Activated CD4-positive, alpha-beta memory T cell treated with anti-CD3 and anti-CD28 coated beads for 36 hours (primary cell): ENCODE measurements at regions of chrX and their contacts with region 1.

Region 1: DNA sequence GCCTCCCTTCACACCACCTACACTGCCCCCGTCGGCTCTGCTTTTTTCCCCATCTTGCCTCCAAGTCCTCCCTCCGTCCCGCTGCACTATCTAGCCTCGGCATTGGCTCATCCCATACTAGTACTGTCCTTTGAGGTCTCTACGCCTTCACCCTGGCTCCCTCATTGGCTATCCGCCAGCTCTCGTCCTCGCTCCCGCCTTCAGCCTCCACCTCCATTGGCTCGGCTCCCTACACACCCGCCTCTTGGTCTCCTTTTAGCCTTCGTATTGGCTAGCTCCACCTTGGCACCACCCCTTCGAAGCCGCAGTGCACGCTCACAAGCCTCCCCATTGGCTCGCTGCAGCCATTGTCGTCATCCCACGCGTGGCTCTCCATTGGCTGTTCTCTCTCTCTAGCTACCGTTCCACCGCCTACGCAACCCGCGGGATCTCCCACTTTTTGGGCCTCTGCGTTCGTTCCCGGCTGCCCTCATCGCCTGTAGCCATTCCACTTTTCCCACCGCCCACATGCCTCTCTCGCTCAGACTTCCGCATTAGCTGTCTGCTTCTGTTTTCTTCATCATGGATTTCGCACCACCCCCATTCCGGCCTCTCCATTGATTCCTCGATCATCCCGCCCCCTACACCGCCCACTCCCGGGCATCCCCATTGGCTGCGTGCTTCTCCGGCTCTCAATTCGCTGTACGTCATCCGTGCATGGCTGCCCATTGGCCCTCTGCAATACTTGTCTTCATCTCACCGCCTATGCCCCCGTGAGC is 404 bp upstream of the PPP1R3F start:
- DNase-seq: peak; percentile 97
- H3K4me3 Mint-ChIP-seq: peak overlapping the region; percentile 91
- H3K27ac Mint-ChIP-seq: peak overlapping the region; percentile 98
- H3K4me1 Mint-ChIP-seq: peaks cover 56% of the 10 kb centered on the region
- H3K27me3 Mint-ChIP-seq: no peaks in the 10 kb centered on the region

Region 2: DNA sequence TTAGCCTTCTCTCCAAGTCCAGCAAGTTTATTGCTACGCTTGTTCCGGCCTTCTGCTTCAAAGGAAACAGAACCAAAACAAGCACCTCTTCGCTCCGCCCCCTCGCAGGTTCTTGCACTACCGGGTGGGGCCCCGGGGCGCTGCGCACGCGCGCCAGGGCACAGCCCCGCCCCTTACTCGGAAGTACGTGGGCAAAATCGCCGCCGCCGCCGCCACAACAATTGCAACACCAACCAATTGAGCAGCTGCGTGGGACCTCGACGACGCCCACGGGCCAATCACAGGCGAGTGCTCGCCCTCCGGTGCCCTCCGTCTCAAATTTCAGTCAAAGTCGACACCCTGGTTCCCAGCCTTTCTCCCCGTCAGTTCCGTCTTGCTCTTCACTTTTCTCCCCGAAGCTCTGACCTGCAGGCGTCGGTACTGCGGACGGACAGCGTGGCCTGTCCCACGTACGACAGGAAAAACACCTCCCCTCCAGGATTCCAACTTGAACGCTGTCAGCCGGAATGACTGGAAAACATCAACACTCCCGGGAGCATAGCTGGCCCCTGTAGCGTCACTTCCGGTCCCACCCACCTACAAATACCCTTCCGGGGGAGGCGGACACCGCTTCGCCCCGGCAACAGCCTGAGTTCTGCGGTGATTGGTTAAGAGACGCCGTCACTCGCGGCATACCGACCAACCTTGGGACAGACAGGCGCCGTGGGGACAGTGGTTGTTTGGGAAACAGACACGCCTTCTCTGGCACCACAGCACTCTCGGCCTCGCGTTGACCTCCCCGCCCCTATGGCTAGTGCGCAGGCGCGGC is 311.2 kb before region 1 on chrX:
- CTCF ChIA-PET with region 1: no interaction called
- POLR2A ChIA-PET with region 1: no interaction called
- intact Hi-C with region 1: loop called (anchors 5 kb)
- DNase-seq: peak; percentile 95
- H3K4me3 Mint-ChIP-seq: peak overlapping the region; percentile 99
- H3K27ac Mint-ChIP-seq: peak overlapping the region; percentile 100
- H3K4me1 Mint-ChIP-seq: peaks cover 32% of the 10 kb centered on the region
- H3K27me3 Mint-ChIP-seq: no peaks in the 10 kb centered on the region

Region 3: GRCh38 chrX:49120099-49120498 is 149.1 kb before region 1 on chrX:
- CTCF ChIA-PET with region 1: no interaction called
- POLR2A ChIA-PET with region 1: no interaction called
- intact Hi-C with region 1: loop called (anchors 1 kb)
- DNase-seq: no peak
- H3K4me3 Mint-ChIP-seq: no peak overlapping the region
- H3K27ac Mint-ChIP-seq: no peak overlapping the region
- H3K4me1 Mint-ChIP-seq: peaks cover 37% of the 10 kb centered on the region
- H3K27me3 Mint-ChIP-seq: no peaks in the 10 kb centered on the region

Region 4: DNA sequence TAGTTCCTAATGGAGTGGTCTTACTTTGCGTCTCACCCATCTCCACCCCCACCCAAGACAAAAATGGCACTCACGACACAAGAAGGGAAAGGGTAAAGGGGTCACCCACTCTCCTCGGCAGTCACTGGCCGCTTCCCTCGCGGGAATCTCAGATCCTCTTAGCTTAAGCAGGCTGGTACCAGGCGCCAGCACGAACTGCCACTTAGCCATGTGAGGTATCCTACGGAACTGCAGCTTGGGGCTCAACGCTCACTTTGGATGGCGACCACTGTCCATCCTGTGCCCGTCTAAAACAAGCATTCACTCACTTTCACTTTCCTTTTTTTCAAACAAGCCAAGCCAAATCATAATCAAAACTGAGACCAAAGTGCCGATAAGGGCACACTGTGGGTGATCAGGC is 121.3 kb before region 1 on chrX:
- CTCF ChIA-PET with region 1: no interaction called
- POLR2A ChIA-PET with region 1: no interaction called
- intact Hi-C with region 1: no loop called
- DNase-seq: no peak
- H3K4me3 Mint-ChIP-seq: no peak overlapping the region
- H3K27ac Mint-ChIP-seq: no peak overlapping the region
- H3K4me1 Mint-ChIP-seq: no peaks in the 10 kb centered on the region
- H3K27me3 Mint-ChIP-seq: no peaks in the 10 kb centered on the region

Region 5: DNA sequence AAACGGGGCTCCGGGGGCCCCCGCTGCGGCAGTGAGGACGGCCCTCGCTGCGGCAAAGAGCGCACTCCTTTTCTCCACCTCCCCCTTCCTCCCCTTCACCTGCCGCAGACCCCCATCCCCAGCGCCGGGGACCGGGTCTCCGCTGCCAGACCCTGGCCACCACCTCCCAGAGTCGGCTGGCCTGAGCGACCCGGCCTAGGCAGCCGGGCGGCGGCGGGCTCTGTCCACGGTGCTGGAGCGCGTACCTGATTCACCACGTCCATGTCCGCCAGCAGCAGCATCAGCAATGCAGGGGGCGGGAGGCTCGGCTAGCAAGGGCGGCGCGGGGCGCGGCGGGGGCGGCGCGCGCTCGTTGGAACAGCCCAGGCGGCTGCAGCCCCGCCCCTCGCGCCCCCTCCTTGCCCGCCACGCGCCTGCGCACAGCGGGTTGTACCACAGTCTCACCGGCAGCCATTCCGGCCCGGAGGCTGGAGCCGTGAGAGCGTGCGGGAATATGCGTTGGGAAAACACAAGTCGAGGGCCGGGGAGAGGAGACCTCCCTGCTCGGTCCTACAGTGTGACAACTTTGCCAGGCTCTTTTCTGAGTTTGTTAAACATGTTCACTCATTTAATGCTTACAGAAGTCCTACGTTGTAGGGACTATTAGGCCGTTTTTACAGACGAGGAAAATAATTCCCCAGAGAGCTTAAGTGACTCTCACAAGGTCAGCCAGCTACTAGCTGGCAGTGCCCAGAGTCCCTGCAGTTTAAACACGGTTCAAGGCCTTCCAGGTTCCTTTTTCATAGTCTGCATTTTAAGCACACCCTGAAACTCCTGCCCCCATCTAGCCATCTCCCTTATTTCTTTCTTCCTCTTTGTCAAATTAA is 69.0 kb before region 1 on chrX and contains the start of gene SYP:
- CTCF ChIA-PET with region 1: no interaction called
- POLR2A ChIA-PET with region 1: no interaction called
- intact Hi-C with region 1: loop called (anchors 2 kb)
- DNase-seq: peak; percentile 92
- H3K4me3 Mint-ChIP-seq: peak within 1 kb of the TSS; percentile 51
- H3K27ac Mint-ChIP-seq: peak within 1 kb of the TSS; percentile 33
- H3K4me1 Mint-ChIP-seq: peaks cover 18% of the 10 kb centered on the region
- H3K27me3 Mint-ChIP-seq: no peaks in the 10 kb centered on the region
- total RNA-seq, gene SYP: 5.3 to 5.4 TPM

Region 6: GRCh38 chrX:49230469-49231232 is 38.5 kb before region 1 on chrX:
- CTCF ChIA-PET with region 1: interaction called, 3 read pairs
- POLR2A ChIA-PET with region 1: no interaction called
- intact Hi-C with region 1: loop called (anchors 1 kb)
- DNase-seq: peak; percentile 81
- H3K4me3 Mint-ChIP-seq: peak overlapping the region; percentile 69
- H3K27ac Mint-ChIP-seq: peak overlapping the region; percentile 75
- H3K4me1 Mint-ChIP-seq: peaks cover 14% of the 10 kb centered on the region
- H3K27me3 Mint-ChIP-seq: no peaks in the 10 kb centered on the region

Region 7: DNA sequence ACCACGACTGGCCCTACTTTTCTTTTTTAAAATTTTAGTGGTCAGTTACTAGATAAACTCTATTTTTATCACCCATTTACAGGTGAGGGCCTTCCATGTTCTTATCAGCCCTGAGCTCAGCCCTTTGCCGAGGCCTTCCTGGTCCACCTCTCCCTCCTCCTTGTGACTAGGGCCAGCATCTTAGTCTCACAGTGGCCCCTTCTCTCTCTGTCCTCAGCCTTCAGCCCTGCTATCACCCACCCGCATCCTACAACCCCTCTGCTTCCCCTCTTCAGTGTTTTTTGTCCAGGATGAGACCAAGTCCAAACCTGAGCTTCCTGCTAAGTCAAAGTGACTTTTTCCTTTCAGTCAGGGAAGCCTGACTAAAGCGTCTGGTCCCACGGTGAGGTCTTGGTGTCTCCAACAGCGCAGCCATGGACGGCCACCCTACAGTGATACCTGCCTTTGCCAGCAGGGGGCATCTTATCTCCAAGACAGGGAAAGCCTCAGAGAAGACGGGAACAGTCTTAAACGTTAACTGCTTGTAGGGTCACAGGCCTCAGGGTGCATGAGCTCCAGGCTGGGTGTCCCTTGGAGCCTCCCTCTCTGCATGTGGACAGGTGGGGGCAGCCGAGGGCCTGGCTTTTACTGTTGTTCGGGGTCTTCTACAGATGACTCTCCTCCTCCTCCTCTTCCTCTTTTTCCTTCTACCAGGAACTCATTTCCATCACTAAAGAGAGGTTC is 22.6 kb after region 1 on chrX:
- CTCF ChIA-PET with region 1: no interaction called
- POLR2A ChIA-PET with region 1: no interaction called
- intact Hi-C with region 1: loop called (anchors 2 kb)
- DNase-seq: peak; percentile 79
- H3K4me3 Mint-ChIP-seq: no peak overlapping the region
- H3K27ac Mint-ChIP-seq: no peak overlapping the region
- H3K4me1 Mint-ChIP-seq: peaks cover 32% of the 10 kb centered on the region
- H3K27me3 Mint-ChIP-seq: no peaks in the 10 kb centered on the region

Region 8: DNA sequence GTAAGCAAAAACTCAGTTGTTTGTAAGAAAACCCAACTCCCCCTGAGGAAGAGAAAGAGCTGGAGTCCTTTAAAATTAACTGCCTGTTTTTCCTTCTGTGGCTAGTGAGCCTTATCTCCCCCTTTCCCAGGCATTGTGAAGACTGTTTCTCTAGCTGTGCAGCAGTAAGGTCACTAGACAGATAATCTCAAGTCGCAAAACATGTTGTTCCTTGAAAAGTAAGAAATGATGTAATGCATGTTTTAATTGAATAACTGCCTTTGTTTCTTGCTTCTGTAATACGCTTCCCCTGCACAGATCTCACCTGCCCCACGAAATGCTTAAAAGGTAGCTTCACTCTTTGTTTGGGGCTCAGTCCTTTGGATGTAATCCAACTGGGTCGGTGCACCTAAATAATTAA is 46.9 kb after region 1 on chrX:
- CTCF ChIA-PET with region 1: no interaction called
- POLR2A ChIA-PET with region 1: no interaction called
- intact Hi-C with region 1: no loop called
- DNase-seq: no peak
- H3K4me3 Mint-ChIP-seq: no peak overlapping the region
- H3K27ac Mint-ChIP-seq: no peak overlapping the region
- H3K4me1 Mint-ChIP-seq: no peaks in the 10 kb centered on the region
- H3K27me3 Mint-ChIP-seq: no peaks in the 10 kb centered on the region